Mammary epithelial cell (primary cell): ENCODE measurements at regions of chr3 and their contacts with region 1.

Region 1: GRCh38 chr3:66038726-66039589 is at the start of gene MAGI1:
- DNase-seq: peak; percentile 93
- H3K4me3 ChIP-seq: peak within 1 kb of the TSS; percentile 85 to 93 (median 86)
- H3K27ac ChIP-seq: peak within 1 kb of the TSS; percentile 75
- H3K4me1 ChIP-seq: peaks cover 29% of the 10 kb centered on the region
- H3K27me3 ChIP-seq: no peaks in the 10 kb centered on the region
- CTCF ChIP-seq: no peak
- total RNA-seq, gene MAGI1: 16.1 to 30.5 TPM

Region 2: GRCh38 chr3:65685621-65686235 is 353.2 kb before region 1 on chr3:
- CTCF ChIA-PET with region 1: no interaction called
- dilution Hi-C with region 1: no loop called
- in situ Hi-C with region 1: no loop called
- intact Hi-C with region 1: no loop called
- DNase-seq: no peak
- H3K4me3 ChIP-seq: no peak overlapping the region
- H3K27ac ChIP-seq: no peak overlapping the region
- H3K4me1 ChIP-seq: no peaks in the 10 kb centered on the region
- H3K27me3 ChIP-seq: no peaks in the 10 kb centered on the region
- CTCF ChIP-seq: no peak

Region 3: GRCh38 chr3:65831733-65832425 is 207.1 kb before region 1 on chr3:
- CTCF ChIA-PET with region 1: no interaction called
- dilution Hi-C with region 1: no loop called
- in situ Hi-C with region 1: no loop called
- intact Hi-C with region 1: loop called (anchors 5 kb)
- DNase-seq: peak; percentile 56
- H3K4me3 ChIP-seq: no peak overlapping the region
- H3K27ac ChIP-seq: no peak overlapping the region
- H3K4me1 ChIP-seq: peaks cover 47% of the 10 kb centered on the region
- H3K27me3 ChIP-seq: no peaks in the 10 kb centered on the region
- CTCF ChIP-seq: no peak

Region 4: GRCh38 chr3:65927549-65927948 is 111.4 kb before region 1 on chr3:
- CTCF ChIA-PET with region 1: no interaction called
- dilution Hi-C with region 1: no loop called
- in situ Hi-C with region 1: no loop called
- intact Hi-C with region 1: loop called (anchors 5 kb)
- DNase-seq: peak; percentile 81
- H3K4me3 ChIP-seq: no peak overlapping the region
- H3K27ac ChIP-seq: no peak overlapping the region
- H3K4me1 ChIP-seq: peaks cover 13% of the 10 kb centered on the region
- H3K27me3 ChIP-seq: peaks cover 2% of the 10 kb centered on the region
- CTCF ChIP-seq: no peak

Region 5: GRCh38 chr3:65979162-65979561 is 59.8 kb before region 1 on chr3:
- CTCF ChIA-PET with region 1: interaction called, 11 read pairs
- dilution Hi-C with region 1: no loop called
- in situ Hi-C with region 1: no loop called
- intact Hi-C with region 1: no loop called
- DNase-seq: peak; percentile 19
- H3K4me3 ChIP-seq: no peak overlapping the region
- H3K27ac ChIP-seq: no peak overlapping the region
- H3K4me1 ChIP-seq: no peaks in the 10 kb centered on the region
- H3K27me3 ChIP-seq: no peaks in the 10 kb centered on the region
- CTCF ChIP-seq: no peak

Region 6: DNA sequence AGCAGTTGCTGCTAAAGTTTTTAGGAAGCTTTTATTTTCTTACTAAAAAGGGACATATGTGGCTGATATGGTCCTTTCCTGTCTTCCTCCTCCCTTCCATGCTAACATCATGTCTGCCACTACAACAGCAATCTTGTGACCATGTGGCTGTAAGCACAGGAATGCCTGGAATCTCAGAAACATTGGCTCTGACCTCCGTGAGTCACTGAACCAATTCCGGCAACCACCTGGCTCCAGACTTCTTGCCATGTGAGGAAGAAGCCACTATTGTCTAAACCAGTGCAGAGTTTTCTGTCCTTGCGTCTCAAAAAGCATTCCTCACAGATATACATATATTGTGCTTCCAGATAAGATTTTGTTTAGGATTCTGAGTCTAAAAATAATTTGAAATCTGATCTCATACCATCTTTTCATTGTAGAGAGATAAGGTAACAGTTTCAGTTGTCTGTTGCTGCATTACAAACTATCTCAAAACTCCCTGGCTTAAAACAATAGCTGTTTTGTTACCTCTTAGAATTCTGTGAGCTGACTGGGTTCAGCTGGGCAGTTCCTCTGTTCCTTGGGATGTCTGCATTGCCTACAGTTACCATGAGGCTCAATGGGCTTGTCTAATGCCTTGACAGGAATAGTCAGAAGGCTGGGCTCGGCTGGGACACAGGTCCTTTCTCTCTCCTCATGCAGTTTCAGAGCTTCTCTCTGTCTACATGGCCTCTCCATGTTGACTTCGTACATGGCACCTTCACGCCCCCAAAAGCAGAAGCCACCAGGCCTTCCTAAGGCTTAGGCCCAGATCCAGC is 77.1 kb after region 1 on chr3:
- CTCF ChIA-PET with region 1: no interaction called
- dilution Hi-C with region 1: no loop called
- in situ Hi-C with region 1: no loop called
- intact Hi-C with region 1: loop called (anchors 2 kb)
- DNase-seq: peak; percentile 88
- H3K4me3 ChIP-seq: no peak overlapping the region
- H3K27ac ChIP-seq: peak overlapping the region; percentile 53
- H3K4me1 ChIP-seq: peaks cover 16% of the 10 kb centered on the region
- H3K27me3 ChIP-seq: no peaks in the 10 kb centered on the region
- CTCF ChIP-seq: no peak